Pancreas (tissue), 10 donors: ENCODE measurements at regions of chr3 and their contacts with region 1.

Region 1: DNA sequence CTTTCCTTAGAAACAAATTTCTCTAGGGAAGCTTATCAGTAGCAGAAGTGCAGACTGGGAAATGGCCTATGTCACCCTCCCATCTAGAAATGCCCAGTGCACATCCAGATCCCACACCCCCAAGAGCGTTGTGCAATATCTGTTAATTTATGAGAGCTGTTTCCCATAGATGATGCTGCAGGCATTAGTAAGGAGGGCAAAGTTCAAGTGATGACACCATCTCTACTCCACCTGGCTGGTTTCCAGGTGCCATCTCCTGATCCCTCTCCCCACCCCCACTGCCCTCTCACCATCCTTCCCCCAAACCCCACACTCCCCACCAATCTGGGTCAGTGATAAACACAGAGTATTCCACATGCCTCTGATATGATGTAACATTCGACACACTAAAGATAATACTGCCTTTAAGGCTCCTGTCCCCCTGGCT is 39.4 kb downstream of the AGTR1 start:
- DNase-seq: peak in 2 of 6 donors; percentile 27 to 28
- ATAC-seq: peak; percentile 8 to 32 (median 25)
- H3K4me3 ChIP-seq: no peak overlapping the region
- H3K27ac ChIP-seq: peak overlapping the region in 3 of 4 donors; percentile 24 to 87 (median 82)
- H3K4me1 ChIP-seq: peaks cover 13 to 39% (median 22%) of the 10 kb centered on the region in 3 donors
- H3K27me3 ChIP-seq: no peaks in the 10 kb centered on the region
- CTCF ChIP-seq: no peak

Region 2: GRCh38 chr3:148828136-148828690 is 91.1 kb after region 1 on chr3:
- intact Hi-C with region 1: loop called in 2 of 3 experiments (anchors 5 to 10 kb)
- DNase-seq: no peak
- ATAC-seq: peak in 1 of 4 donors; percentile 3
- H3K4me3 ChIP-seq: peak overlapping the region; percentile 16 to 56 (median 40)
- H3K27ac ChIP-seq: peak overlapping the region; percentile 44 to 90 (median 70)
- H3K4me1 ChIP-seq: peaks cover 11 to 12% (median 11%) of the 10 kb centered on the region in 3 donors
- H3K27me3 ChIP-seq: no peaks in the 10 kb centered on the region
- CTCF ChIP-seq: no peak

Region 3: GRCh38 chr3:148839805-148840204 is 102.7 kb after region 1 on chr3:
- intact Hi-C with region 1: loop called in 1 of 3 experiments (anchors 10 kb)
- DNase-seq: no peak
- ATAC-seq: peak in 1 of 4 donors; percentile 2
- H3K4me3 ChIP-seq: peak overlapping the region in 1 of 4 donors; percentile 19
- H3K27ac ChIP-seq: peak overlapping the region in 2 of 4 donors; percentile 53 to 57
- H3K4me1 ChIP-seq: peaks cover 0 to 21% (median 3%) of the 10 kb centered on the region in 3 donors
- H3K27me3 ChIP-seq: no peaks in the 10 kb centered on the region
- CTCF ChIP-seq: no peak

Region 4: DNA sequence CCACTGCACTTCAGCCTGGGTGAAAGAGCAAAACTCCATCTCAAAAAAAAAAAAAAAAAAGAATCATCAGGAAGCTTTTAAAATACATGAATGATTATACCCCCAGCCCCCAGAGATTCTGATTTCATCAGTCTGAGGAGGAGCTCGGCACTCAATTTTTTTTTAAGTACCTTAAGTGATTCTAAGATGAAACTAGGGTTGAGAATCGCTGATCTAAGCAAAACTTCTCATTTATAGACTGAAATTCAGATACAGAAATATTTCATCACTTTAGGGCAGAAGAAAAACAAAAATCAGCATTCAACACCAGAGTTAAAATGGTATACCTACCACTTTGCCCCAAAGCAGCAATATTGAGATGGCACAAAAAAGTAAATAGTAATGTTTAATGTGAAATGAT is 152.7 kb after region 1 on chr3:
- intact Hi-C with region 1: no loop called
- DNase-seq: no peak
- ATAC-seq: no peak
- H3K4me3 ChIP-seq: no peak overlapping the region
- H3K27ac ChIP-seq: no peak overlapping the region
- H3K4me1 ChIP-seq: no peaks in the 10 kb centered on the region
- H3K27me3 ChIP-seq: no peaks in the 10 kb centered on the region
- CTCF ChIP-seq: no peak